Kidney (tissue), 22 donors: ENCODE measurements at regions of chr2 and their contacts with region 1.

Region 1: DNA sequence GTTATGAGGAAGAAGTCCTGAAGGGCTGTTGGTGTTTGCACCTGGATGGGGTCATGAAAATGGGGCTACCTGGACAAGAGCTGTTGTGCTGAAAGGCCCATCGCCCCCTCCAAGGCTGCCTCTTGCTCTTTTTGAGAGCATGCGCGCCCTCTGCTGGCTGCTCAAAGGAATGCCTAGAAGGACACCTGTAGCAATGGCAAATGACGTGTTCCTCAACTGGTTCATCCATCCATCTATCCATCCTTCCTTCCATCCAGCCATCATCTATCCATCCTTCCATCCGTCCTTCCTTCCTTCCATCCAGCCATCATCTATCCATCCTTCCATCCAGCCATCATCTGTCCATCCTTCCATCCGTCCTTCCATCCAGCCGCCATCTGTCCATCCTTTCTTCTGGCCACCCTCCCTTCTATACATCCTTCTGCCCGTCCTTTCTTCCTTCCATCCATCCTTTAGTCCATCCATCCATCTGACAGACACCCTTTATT is 17.2 kb upstream of the RPL31 start:
- DNase-seq: peak; percentile 76 to 88 (median 82)
- H3K4me3 ChIP-seq: no peak overlapping the region
- H3K27ac ChIP-seq: no peak overlapping the region
- H3K4me1 ChIP-seq: no peaks in the 10 kb centered on the region
- H3K27me3 ChIP-seq: no peaks in the 10 kb centered on the region
- CTCF ChIP-seq: peak; percentile 92

Region 2: DNA sequence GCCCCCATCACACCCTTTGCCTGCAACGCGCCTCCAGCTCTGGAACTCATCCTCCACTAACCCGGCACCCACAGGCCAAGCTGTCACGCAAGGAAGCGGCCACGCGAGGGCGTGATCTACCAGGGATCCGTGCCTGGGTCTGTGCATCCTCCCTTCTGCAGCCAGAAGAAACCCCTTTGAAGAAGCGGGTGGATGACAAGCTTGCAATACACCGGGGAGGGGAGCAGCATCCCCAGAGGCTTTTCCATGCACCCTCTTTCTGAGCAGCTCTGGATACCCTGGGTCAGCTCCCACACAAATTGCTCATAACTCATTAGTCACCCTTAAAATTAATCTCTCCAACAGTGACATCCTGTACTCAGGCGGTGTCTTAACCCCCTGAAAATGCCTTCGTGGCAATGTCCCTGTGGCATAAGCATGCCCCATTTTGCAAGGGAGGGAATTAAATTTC is 374.5 kb before region 1 on chr2:
- intact Hi-C with region 1: loop called (anchors 5 kb)
- DNase-seq: peak; percentile 81 to 87 (median 84)
- H3K4me3 ChIP-seq: no peak overlapping the region
- H3K27ac ChIP-seq: no peak overlapping the region
- H3K4me1 ChIP-seq: no peaks in the 10 kb centered on the region
- H3K27me3 ChIP-seq: no peaks in the 10 kb centered on the region
- CTCF ChIP-seq: peak; percentile 50

Region 3: DNA sequence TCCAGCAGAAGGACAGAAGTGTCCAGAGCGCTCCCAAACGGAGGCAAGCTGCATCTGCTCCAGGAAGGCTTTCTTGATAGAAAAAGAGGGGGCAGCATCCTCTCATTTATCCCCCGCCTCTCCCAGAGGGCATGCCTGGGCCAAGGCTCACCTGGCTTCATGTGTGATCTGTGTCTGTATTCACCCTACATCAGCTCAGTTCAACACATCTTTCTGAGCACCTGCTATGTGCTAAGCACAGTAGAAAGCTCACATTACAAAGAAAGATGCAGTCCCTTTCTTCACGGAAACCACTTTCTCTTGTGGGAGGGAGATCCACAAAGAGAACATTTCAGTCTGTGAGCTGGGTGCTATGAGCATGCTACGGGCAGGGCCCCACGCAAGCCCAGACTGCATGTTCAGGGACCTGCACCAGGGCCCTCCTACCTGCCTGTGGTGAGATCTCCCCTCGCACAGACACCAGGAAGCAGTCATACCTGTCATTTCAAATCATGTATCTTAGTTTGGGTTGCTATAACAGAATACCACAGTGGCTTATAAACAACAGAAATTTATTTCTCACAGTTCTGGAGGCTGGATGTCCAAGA is 331.4 kb before region 1 on chr2:
- intact Hi-C with region 1: no loop called
- DNase-seq: peak in 1 of 5 donors; percentile 13
- H3K4me3 ChIP-seq: no peak overlapping the region
- H3K27ac ChIP-seq: no peak overlapping the region
- H3K4me1 ChIP-seq: no peaks in the 10 kb centered on the region
- H3K27me3 ChIP-seq: no peaks in the 10 kb centered on the region
- CTCF ChIP-seq: no peak

Region 4: GRCh38 chr2:100730346-100730745 is 254.6 kb before region 1 on chr2:
- intact Hi-C with region 1: loop called (anchors 10 kb)
- DNase-seq: peak in 3 of 5 donors; percentile 32 to 43 (median 32)
- H3K4me3 ChIP-seq: no peak overlapping the region
- H3K27ac ChIP-seq: no peak overlapping the region
- H3K4me1 ChIP-seq: no peaks in the 10 kb centered on the region
- H3K27me3 ChIP-seq: no peaks in the 10 kb centered on the region
- CTCF ChIP-seq: peak; percentile 61

Region 5: DNA sequence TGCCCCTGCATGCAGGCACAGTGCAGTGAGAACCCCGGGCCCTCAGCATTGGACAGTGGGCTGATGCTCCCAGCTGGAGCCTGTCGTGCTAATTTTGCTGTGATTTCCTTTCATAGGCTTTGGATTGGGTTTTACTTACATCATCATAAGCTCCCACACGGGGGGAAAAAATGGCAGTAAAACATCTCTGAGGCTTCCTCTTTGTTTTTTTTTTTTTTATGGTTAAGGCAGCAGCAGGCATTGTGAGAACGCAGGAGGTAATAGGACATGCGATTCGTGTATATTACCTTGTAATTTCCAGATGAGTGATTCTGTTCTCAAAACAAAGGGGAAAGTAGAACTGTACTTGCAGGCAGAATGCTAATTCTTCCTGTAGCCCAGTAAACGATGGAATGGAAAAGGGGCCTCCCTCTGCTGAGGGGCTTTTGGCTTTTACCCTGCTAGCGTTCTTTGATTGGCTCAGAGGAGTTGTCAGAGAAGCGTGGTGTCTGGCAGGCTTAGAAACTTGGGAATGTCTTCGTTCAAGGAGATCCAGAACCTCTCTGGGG is 75.3 kb before region 1 on chr2:
- intact Hi-C with region 1: no loop called
- DNase-seq: peak in 3 of 5 donors; percentile 26 to 79 (median 67)
- H3K4me3 ChIP-seq: no peak overlapping the region
- H3K27ac ChIP-seq: no peak overlapping the region
- H3K4me1 ChIP-seq: peaks cover 0 to 4% (median 0%) of the 10 kb centered on the region in 3 donors
- H3K27me3 ChIP-seq: no peaks in the 10 kb centered on the region
- CTCF ChIP-seq: no peak

Region 6: DNA sequence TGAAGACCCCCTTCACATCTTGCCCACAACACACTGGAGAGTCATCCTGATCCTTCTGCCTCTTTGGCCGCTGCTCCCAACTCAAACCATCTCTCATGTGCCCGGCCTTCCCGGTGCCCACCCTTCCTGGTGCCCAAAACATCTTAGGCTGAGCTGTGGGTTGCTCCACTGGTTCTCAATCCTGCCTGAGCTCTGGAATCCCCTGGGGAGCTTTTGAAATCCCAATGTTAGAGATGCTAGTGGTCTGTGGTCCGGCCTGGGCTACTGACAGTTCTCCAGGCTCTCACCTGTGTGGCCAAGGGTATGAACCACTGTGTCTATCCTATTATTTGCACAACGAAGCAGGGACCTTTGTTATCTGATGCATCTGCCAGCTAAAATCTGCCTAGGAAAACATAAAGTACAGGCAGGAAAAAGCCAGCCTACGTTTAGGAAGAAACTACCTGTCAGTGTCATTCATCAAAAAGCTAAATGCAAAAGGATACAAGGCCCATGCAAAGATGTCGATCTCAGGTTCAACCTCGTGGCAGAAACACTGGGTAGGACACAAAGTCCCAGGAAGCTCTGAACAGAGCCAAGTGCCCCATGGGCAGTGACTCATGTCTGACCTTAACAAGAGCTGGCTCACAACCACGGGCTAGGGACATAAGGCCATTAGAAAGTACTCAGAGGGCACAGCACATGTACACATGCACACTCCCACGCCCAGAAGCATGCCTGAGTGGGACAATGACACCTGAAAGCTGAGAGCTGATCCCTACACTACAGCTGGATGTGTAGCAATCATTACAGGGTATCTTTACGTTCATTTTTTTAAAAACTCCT is 135.4 kb after region 1 on chr2:
- intact Hi-C with region 1: no loop called
- DNase-seq: peak; percentile 61 to 91 (median 78)
- H3K4me3 ChIP-seq: no peak overlapping the region
- H3K27ac ChIP-seq: peak overlapping the region; percentile 65 to 69
- H3K4me1 ChIP-seq: peaks cover 10 to 40% (median 31%) of the 10 kb centered on the region in 3 donors
- H3K27me3 ChIP-seq: no peaks in the 10 kb centered on the region
- CTCF ChIP-seq: no peak

Region 7: GRCh38 chr2:101396316-101396717 is 411.4 kb after region 1 on chr2:
- intact Hi-C with region 1: no loop called
- DNase-seq: no peak
- H3K4me3 ChIP-seq: no peak overlapping the region
- H3K27ac ChIP-seq: no peak overlapping the region
- H3K4me1 ChIP-seq: peaks cover 0 to 11% (median 4%) of the 10 kb centered on the region in 3 donors
- H3K27me3 ChIP-seq: no peaks in the 10 kb centered on the region
- CTCF ChIP-seq: no peak